Endothelial cell of umbilical vein (primary cell): ENCODE measurements at regions of chr5 and their contacts with region 1.

Region 1: DNA sequence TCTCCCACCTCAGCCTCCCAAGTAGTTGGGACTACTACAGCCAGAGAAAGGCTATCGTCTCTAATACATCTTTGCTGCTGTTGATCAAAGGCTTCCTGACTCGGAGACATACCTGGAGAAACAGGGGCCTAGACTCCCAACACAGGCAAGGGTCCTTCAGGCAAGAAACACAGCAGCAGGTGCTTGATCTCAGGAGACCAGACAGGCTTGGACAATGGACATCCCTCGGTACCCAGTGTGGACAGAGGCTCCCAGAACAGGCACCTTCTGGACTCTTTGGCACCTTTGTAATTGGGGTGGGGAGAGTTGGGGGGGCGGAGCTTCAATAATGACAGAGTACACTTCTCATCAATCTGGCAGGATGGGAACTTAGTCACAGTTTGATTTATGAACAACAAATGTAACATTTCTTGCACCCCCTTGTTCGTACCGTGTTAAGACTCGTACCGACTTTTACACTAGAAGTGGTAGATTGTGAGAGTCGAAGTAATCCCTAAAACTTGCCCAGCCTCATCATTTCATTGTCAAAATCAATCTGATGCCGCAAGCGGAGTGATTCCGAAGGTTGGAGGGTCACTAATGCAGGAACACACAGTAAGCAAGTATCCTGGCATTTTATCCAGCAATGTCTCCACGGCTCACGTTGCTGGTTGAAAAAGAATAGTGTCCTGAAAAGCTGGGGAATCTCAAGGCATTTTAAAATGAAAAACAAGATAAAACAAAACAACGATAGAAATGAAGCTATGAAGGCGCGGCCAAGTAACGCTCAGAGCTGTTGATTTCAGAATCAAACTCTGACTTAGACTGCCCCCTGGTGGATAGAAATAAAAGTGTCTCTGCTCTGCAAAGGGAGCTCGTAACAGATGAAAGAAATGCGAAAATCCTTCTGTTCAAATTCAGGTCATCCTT is 46.4 kb upstream of the STK32A start:
- DNase-seq: peak; percentile 46
- H3K4me3 ChIP-seq: no peak overlapping the region
- H3K27ac ChIP-seq: no peak overlapping the region
- H3K4me1 ChIP-seq: no peaks in the 10 kb centered on the region
- H3K27me3 ChIP-seq: peaks cover 0 to 8% of the 10 kb centered on the region in 2 experiments
- CTCF ChIP-seq: peak; percentile 60 to 70
- POLR2A ChIP-seq: no peak

Region 2: DNA sequence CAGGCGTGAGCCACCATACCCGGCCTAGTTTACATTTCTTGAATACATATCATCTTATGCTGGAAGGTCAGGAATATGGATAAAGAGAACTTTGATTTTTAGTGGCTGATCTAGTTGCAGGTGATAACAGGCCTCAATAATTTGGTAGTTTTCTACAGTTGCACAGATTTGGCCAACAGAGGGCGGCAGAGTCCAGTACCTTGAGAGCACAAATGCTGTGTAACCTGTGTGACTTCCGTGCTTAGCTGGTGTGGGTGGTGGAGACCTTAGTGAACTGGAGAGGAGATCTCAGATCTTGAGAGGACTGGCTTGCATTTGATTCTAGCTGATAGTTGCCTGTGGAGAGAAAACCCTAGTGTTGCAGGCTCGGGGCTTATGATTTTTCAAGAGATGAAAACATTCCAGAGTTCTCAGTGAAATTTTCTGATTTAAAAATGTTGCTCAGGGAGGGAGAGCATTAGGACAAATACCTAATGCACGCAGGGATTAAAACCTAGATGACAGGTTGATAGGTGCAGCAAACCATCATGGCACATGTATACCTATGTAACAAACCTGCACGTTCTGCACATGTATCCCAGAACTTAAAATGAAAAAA is 655.1 kb before region 1 on chr5:
- CTCF ChIA-PET with region 1: interaction called, 227 read pairs
- POLR2A ChIA-PET with region 1: no interaction called
- dilution Hi-C with region 1: no loop called
- intact Hi-C with region 1: loop called (anchors 1 kb)
- DNase-seq: peak; percentile 61
- H3K4me3 ChIP-seq: no peak overlapping the region
- H3K27ac ChIP-seq: no peak overlapping the region
- H3K4me1 ChIP-seq: no peaks in the 10 kb centered on the region
- H3K27me3 ChIP-seq: peaks cover 0 to 2% of the 10 kb centered on the region in 2 experiments
- CTCF ChIP-seq: peak; percentile 74 to 77
- POLR2A ChIP-seq: no peak

Region 3: DNA sequence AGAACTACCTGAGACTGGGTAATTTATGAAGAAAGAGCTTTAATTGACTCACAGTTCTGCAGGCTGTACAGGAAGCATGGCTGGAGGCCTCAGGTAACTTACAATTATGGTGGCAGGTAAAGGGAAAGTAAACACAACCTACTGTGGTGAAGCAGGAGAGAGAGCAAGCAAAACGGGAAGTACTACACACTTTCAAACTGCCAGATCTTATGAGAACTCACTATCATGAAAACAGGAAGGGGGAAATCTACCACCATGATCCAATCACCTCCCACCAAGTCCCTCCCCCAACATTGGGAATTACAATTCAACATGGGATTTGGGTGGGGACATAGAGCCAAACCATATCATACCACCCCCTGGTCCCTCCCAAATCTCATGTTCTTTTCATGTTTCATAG is 613.7 kb before region 1 on chr5:
- CTCF ChIA-PET with region 1: no interaction called
- POLR2A ChIA-PET with region 1: no interaction called
- dilution Hi-C with region 1: no loop called
- intact Hi-C with region 1: no loop called
- DNase-seq: no peak
- H3K4me3 ChIP-seq: no peak overlapping the region
- H3K27ac ChIP-seq: no peak overlapping the region
- H3K4me1 ChIP-seq: no peaks in the 10 kb centered on the region
- H3K27me3 ChIP-seq: no peaks in the 10 kb centered on the region
- CTCF ChIP-seq: no peak
- POLR2A ChIP-seq: no peak

Region 4: DNA sequence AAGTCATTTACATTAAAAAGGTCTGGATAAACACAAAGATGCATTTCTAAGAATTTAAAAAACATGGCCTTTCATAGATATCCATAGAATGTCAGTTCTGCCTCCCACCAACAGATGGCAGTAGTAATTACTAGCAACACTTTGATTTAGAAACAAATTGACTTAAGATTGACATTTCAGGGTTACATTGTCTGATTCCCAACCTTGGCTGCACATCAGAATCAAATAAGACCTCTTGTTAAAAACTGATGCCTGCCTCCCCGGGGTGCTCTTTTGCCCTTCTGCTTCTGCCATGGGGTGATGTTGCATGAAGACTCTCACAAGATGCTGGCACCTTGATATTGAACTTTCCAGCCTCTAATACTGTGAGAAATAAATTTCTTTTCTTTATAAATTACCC is 526.2 kb before region 1 on chr5:
- CTCF ChIA-PET with region 1: interaction called, 8 read pairs
- POLR2A ChIA-PET with region 1: no interaction called
- dilution Hi-C with region 1: no loop called
- intact Hi-C with region 1: loop called (anchors 5 kb)
- DNase-seq: peak; percentile 51
- H3K4me3 ChIP-seq: no peak overlapping the region
- H3K27ac ChIP-seq: no peak overlapping the region
- H3K4me1 ChIP-seq: no peaks in the 10 kb centered on the region
- H3K27me3 ChIP-seq: no peaks in the 10 kb centered on the region
- CTCF ChIP-seq: peak; percentile 45 to 48
- POLR2A ChIP-seq: no peak

Region 5: GRCh38 chr5:147160902-147161700 is 27.4 kb before region 1 on chr5:
- CTCF ChIA-PET with region 1: interaction called, 14 read pairs
- POLR2A ChIA-PET with region 1: no interaction called
- dilution Hi-C with region 1: no loop called
- intact Hi-C with region 1: no loop called
- DNase-seq: no peak
- H3K4me3 ChIP-seq: no peak overlapping the region
- H3K27ac ChIP-seq: no peak overlapping the region
- H3K4me1 ChIP-seq: no peaks in the 10 kb centered on the region
- H3K27me3 ChIP-seq: no peaks in the 10 kb centered on the region
- CTCF ChIP-seq: no peak
- POLR2A ChIP-seq: no peak

Region 6: DNA sequence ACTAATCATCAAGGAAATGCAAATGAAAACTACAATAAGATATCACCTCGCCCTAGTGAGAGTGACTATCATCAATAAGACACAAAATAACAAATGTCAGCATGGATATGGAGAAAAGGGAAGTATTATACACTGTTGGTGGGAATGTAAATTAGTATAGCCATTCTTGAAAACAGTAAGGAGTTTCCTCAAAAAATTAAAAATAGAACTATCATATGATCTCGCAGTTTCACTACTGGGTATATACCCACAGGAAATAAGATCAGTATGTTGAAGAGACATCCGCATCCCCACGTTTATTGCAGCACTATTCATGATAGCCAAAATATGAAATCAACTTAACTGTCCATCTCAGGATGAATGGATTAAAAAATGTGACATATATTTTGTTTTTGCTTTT is 14.8 kb after region 1 on chr5:
- CTCF ChIA-PET with region 1: interaction called, 37 read pairs
- POLR2A ChIA-PET with region 1: no interaction called
- dilution Hi-C with region 1: no loop called
- intact Hi-C with region 1: no loop called
- DNase-seq: no peak
- H3K4me3 ChIP-seq: no peak overlapping the region
- H3K27ac ChIP-seq: no peak overlapping the region
- H3K4me1 ChIP-seq: no peaks in the 10 kb centered on the region
- H3K27me3 ChIP-seq: peaks cover 0 to 4% of the 10 kb centered on the region in 2 experiments
- CTCF ChIP-seq: no peak
- POLR2A ChIP-seq: no peak

Region 7: DNA sequence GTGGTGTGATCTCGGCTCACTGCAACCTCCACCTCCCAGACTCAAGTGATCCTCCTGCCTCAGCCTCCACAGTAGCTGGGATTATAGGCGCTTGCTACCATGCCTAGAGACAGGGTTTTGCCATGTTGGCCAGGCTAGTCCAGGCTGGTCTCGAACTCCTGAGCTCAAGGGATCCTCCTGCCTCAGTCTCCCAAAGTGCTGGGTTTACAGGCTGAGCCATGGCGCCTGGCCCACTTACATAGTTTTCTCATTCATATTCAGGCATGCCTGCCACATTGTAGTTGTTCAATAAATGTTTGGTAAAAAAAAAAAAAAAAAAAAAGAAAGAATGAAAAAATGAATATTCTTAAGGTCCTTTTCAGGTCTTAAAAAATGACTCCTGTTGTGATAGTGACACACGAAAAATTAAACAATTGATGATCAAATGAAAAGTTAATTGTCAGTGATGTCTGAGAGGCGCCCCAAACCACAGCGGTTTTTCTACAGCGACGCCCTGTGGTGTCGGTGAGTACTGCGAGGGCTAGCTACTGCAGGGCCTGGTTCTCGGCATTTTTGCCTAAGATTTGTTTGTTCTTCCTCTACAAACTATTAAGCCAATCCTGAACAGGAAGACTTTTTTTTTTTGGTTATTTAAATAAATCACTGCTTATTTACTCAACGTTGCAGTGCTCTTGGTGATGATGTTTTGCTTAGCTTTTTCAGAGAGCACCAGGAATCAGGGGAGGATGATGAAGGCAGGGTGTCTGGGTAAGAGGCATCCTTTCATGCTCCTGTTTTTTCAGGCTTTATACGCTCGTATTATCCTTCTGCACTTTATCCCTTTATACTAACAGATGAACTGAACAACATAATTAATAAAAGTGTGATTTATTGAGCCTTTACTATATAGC is 388.4 kb after region 1 on chr5:
- CTCF ChIA-PET with region 1: interaction called, 31 read pairs
- POLR2A ChIA-PET with region 1: no interaction called
- dilution Hi-C with region 1: no loop called
- intact Hi-C with region 1: no loop called
- DNase-seq: peak; percentile 45
- H3K4me3 ChIP-seq: no peak overlapping the region
- H3K27ac ChIP-seq: no peak overlapping the region
- H3K4me1 ChIP-seq: no peaks in the 10 kb centered on the region
- H3K27me3 ChIP-seq: no peaks in the 10 kb centered on the region
- CTCF ChIP-seq: peak; percentile 86 to 92
- POLR2A ChIP-seq: no peak